ENCODE measurements at regions of chr11 and their contacts with region 1.

Region 1: GRCh38 chr11:123407130-123407995 is 22.7 kb upstream of the GRAMD1B start:
- DNase-seq: peak; percentile 79
- H3K4me3 ChIP-seq: no peak overlapping the region
- H3K27ac ChIP-seq: no peak overlapping the region
- H3K4me1 ChIP-seq: peaks cover 0 to 32% (median 7%) of the 10 kb centered on the region in 4 donors
- H3K27me3 ChIP-seq: peaks cover 13% of the 10 kb centered on the region
- CTCF ChIP-seq: peak; percentile 52 to 79 (median 69)
- EP300 ChIP-seq: no peak
- POLR2A ChIP-seq: no peak

Region 2: DNA sequence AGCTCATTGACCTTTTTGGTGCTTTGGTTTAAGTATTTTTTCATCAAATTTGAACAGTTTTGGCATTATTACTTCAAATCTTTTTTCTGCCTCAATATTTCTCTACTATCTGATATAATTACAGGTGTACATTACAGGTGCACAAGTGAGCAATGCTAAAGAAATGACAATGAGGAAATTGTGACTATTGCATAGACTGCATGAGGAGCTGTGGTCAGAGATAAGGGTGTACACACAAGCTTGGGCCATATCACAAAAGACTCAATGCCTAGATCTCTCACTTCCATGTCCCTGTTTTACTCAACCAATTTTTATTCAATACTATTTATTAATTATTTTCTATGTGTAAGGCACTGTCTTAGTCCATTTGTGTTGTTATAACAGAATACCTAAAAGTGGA is 1002.8 kb before region 1 on chr11:
- in situ Hi-C with region 1: no loop called
- intact Hi-C with region 1: loop called (anchors 5 kb)
- DNase-seq: no peak
- H3K4me3 ChIP-seq: no peak overlapping the region
- H3K27ac ChIP-seq: no peak overlapping the region
- H3K4me1 ChIP-seq: peaks cover 0 to 4% (median 0%) of the 10 kb centered on the region in 4 donors
- H3K27me3 ChIP-seq: no peaks in the 10 kb centered on the region
- CTCF ChIP-seq: no peak
- EP300 ChIP-seq: no peak
- POLR2A ChIP-seq: no peak